ENCODE measurements at regions of chr3 and their contacts with region 1.

Region 1: GRCh38 chr3:100260685-100261484 is at the start of gene TBC1D23:
- DNase-seq: peak; percentile 100
- H3K4me3 ChIP-seq: peak within 1 kb of the TSS; percentile 90
- H3K27ac ChIP-seq: peak within 1 kb of the TSS; percentile 88
- H3K4me1 ChIP-seq: peaks cover 18% of the 10 kb centered on the region
- H3K27me3 ChIP-seq: no peaks in the 10 kb centered on the region
- CTCF ChIP-seq: no peak
- total RNA-seq, gene TBC1D23: 28.1 and 32.4 TPM in 2 replicates

Region 2: DNA sequence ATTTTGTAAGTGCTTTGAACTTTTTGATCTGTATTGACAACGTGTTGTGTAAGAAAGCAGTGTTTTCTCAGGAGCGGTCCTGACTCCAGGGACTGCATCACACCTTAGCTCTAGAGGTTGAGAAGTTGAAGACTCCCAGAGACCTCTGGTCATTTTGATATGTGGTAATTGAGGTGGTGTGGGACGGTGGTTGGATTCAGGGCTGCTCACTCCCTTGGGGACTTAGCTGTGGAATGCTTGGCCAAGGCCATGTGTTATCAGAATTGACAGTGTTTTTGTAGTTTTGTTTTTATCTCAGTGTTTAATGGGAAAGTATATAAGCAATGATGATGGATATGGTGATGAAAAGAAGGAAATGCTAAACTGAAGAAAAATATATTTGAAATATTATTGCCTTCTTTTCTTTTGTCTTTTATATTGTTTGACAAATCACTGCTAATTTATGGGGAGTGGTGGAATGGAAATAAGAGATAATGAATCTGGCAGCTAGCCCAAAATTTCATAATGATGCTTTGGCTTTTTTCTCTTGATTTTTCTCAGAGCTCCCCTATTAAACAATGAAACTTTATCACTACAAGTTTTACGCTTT is 427.2 kb before region 1 on chr3:
- CTCF ChIA-PET with region 1: interaction called, 13 read pairs
- POLR2A ChIA-PET with region 1: no interaction called
- intact Hi-C with region 1: no loop called
- DNase-seq: no peak
- H3K4me3 ChIP-seq: no peak overlapping the region
- H3K27ac ChIP-seq: no peak overlapping the region
- H3K4me1 ChIP-seq: peaks cover 15% of the 10 kb centered on the region
- H3K27me3 ChIP-seq: no peaks in the 10 kb centered on the region
- CTCF ChIP-seq: no peak

Region 3: DNA sequence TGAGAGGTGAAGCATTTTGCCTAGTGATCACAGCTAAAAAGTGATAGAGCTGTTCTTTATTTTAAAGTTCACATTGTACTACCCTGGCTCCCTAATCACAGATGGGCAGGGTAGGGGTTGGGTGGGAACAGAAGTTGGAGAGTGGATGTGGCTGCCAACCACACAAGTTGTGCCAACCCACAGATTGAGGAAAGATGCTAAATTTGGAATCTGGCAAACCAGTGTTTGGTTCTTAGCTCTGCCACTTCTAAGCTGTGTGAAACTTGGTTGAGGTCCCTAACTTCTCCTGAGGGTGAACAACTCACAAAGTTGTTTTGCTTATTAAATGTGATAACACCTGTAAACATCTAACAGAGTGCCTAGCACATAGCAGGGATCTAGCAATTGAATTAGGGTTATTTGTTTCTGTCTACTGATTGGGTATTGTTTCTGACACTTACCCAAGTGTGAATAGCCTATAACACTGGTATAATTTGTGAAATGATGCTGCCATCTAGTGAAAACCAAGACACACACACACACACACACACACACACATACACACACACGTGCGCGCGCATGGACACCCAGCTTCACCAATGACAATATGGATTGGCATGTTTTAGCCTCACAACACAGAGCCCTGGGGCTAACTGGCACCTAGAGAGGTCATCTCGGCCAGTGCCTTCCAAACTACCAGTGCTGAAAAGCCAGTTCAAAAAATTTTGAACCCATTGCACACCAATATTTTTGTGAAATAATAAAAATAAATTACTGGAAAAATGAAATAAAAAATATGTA is 373.8 kb after region 1 on chr3:
- CTCF ChIA-PET with region 1: no interaction called
- POLR2A ChIA-PET with region 1: no interaction called
- intact Hi-C with region 1: no loop called
- DNase-seq: peak; percentile 68
- H3K4me3 ChIP-seq: no peak overlapping the region
- H3K27ac ChIP-seq: no peak overlapping the region
- H3K4me1 ChIP-seq: no peaks in the 10 kb centered on the region
- H3K27me3 ChIP-seq: no peaks in the 10 kb centered on the region
- CTCF ChIP-seq: peak; percentile 54

Measured in A673 (cell line).